ENCODE measurements at regions of chr10 and their contacts with region 1.

Region 1: GRCh38 chr10:95363303-95363912 is 72.6 kb upstream of the PDLIM1 start:
- H3K4me3 Mint-ChIP-seq: no peak overlapping the region
- H3K27ac Mint-ChIP-seq: no peak overlapping the region
- H3K4me1 Mint-ChIP-seq: no peaks in the 10 kb centered on the region
- H3K27me3 Mint-ChIP-seq: peaks cover 6% of the 10 kb centered on the region

Region 2: DNA sequence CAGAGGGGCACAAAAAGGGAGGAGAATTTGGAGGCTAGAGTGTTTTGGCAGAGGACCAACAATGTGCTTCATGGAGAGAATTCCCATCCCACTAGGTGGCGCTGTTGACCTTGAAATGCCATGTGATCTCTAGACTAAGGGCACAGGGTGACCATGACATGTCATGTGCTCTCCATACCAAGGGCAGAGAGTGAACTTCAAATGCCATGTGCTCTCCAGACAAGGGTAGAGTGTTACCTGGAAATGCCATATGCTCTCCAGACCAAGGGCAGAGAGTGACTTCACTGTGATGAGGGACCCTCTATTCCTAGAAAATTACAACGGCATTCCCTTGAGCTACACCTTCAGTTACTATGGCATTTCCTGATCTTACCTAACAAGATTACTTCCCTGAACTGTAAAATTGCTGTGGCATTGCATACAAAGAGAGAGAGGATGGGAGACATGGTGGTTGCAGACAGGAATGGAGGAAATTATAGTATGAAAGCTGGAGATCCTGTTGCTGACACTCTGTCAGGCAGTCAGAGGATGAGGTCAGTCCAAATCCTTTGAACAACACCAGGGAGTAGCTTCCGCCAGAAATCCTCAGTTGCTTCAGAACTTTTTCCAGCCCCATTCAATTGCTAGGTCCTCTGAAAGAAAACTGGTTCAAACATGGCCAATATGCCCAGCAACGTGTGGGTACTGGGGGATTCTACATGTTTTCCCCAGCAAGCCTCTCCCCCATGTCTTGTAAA is 230.2 kb before region 1 on chr10:
- intact Hi-C with region 1: loop called (anchors 1 kb)
- H3K4me3 Mint-ChIP-seq: no peak overlapping the region
- H3K27ac Mint-ChIP-seq: no peak overlapping the region
- H3K4me1 Mint-ChIP-seq: no peaks in the 10 kb centered on the region
- H3K27me3 Mint-ChIP-seq: no peaks in the 10 kb centered on the region

Region 3: DNA sequence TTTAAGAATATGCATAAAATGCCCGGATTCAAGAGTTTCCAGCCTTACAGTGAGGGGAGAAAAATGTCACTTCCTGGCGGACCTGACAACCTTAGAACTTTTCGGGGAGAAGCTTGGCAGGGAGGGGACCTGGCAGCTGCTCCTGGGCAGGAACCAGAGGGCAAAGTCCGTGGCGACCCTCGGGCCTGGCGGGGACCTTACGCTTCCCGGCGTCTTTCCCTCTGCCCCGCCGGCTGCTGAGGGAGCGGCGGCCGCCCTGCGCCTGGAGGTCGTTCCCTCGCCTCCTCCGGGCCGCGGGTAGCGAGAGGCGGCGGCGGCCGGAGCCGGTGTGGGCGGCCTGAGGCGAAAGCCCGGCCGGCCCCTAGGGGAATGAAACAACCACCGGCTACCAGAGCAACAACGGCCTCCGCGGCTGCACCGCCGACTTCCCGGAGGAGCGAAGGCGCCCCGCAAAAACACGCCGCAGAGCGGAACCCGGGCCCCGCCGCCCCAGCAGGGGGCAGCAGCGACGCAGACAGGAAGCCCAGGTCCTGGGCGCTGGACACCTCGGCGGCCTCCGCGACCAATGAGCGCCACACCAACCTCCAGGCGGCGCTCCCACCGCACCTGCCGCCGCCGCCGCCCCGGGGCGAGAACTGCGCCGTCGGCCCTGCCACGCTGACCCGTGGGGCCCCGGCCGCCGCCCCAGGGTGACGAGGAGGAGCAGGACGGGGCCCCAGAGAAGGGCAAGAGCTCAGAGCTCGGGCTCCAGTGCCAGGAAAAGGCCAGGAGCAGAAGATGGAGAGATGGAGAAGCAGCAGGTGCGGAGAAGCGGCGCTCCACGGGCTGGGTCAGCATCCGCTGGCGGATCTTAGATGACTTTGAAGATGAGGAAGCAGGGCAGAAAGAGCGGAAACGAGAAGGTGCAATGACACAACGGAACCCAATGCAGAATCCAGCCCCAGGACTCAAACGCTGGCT is 179.9 kb before region 1 on chr10:
- intact Hi-C with region 1: loop called (anchors 1 kb)
- H3K4me3 Mint-ChIP-seq: peak overlapping the region; percentile 55
- H3K27ac Mint-ChIP-seq: peak overlapping the region; percentile 31
- H3K4me1 Mint-ChIP-seq: peaks cover 5% of the 10 kb centered on the region
- H3K27me3 Mint-ChIP-seq: peaks cover 19% of the 10 kb centered on the region

Region 4: GRCh38 chr10:95350219-95350829 is 13.1 kb before region 1 on chr10:
- intact Hi-C with region 1: no loop called
- H3K4me3 Mint-ChIP-seq: no peak overlapping the region
- H3K27ac Mint-ChIP-seq: no peak overlapping the region
- H3K4me1 Mint-ChIP-seq: peaks cover 9% of the 10 kb centered on the region
- H3K27me3 Mint-ChIP-seq: no peaks in the 10 kb centered on the region

Region 5: DNA sequence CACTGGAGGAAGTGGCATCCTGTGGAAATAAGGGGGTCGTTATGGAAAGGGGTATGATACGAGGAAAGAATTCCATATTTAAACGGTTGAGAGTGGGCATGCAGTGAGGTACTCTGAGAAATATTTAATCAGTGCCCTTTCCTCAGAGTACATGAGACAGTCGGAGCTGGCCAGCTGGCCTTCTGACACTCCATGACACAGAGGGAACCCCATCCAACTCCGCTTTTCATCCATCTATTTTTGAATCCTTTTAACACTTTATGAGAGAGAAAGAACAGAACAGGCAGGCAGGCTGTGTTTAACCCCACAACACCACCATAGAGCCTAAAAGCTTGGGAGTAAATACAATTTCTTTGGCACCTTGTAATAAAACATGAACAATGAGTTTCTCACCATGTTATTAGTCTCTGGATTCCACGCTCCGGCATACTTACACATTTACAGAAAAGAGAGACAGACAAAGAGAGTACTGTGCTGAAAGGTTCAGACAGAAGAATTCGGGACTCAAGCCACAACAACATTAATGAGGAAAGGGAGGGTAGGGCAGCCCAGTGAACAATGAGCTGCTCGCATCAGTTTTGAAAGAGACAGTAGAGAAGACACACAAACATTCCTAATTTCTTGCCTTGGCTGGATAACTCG is 51.6 kb after region 1 on chr10:
- intact Hi-C with region 1: no loop called
- H3K4me3 Mint-ChIP-seq: no peak overlapping the region
- H3K27ac Mint-ChIP-seq: no peak overlapping the region
- H3K4me1 Mint-ChIP-seq: no peaks in the 10 kb centered on the region
- H3K27me3 Mint-ChIP-seq: peaks cover 3% of the 10 kb centered on the region

Region 6: GRCh38 chr10:95513941-95514392 is 150.6 kb after region 1 on chr10:
- intact Hi-C with region 1: no loop called
- H3K4me3 Mint-ChIP-seq: no peak overlapping the region
- H3K27ac Mint-ChIP-seq: no peak overlapping the region
- H3K4me1 Mint-ChIP-seq: no peaks in the 10 kb centered on the region
- H3K27me3 Mint-ChIP-seq: no peaks in the 10 kb centered on the region

Measured in dendritic cell treated with granulocyte-macrophage colony-stimulating factor and Interleukin-4, amounts not matched to agents 40 ng/mL and 50 ng/mL, for 4 days (primary cell).